Right ventricle myocardium superior (tissue), 1 donor: ENCODE measurements at regions of chr3 and their contacts with region 1.

Region 1: DNA sequence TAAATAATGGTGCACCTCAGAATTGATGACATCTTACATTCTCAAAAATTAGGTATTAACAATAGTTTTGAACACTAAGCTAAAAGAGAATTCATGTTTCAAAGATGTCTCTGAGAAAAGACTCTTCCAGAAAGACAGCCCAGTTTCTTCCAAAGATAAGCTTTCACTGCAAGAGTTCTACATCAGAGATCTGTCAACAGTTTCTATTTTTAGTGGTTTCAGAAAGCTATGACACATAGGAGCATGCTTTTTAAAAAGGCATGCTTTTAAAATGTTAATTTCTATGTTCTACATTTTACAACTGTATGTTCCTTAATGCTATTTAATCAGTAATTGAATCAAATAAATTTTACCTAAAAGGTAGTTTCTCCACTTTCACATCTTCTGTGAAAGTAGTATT is 88.2 kb downstream of the PLOD2 start:
- DNase-seq: no peak
- ATAC-seq: peak; percentile 64

Region 2: DNA sequence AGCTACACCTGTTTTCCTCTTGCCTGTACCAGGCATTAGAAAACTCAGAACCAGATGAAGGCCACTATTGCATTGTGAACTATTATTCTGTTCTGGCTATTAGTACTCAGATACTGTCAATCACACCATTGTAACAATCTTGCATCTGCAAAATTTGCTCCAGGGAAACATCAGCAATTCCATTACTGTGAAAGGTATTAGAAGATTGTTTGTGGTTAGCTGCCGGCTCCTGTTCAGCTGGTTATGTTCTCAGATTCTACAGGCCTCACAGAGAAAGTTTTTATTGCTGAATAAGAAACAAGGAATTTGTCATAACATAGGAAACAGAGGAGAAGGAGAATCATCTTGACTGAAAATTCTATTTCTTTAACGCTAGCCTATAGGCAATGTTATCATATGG is 91.8 kb before region 1 on chr3:
- intact Hi-C with region 1: no loop called
- DNase-seq: no peak
- ATAC-seq: no peak

Region 3: GRCh38 chr3:146160964-146161662 is 88.3 kb after region 1 on chr3 and contains the start of gene PLOD2:
- intact Hi-C with region 1: loop called (anchors 10 kb)
- DNase-seq: peak; percentile 86
- ATAC-seq: peak; percentile 81
- total RNA-seq, gene PLOD2: 16.9 TPM

Region 4: GRCh38 chr3:146374146-146374545 is 301.3 kb after region 1 on chr3:
- intact Hi-C with region 1: no loop called
- DNase-seq: no peak
- ATAC-seq: no peak